Activated CD4-positive, alpha-beta T cell treated with anti-CD3 and anti-CD28 coated beads for 36 hours (primary cell): ENCODE measurements at regions of chr14 and their contacts with region 1.

Region 1: GRCh38 chr14:100213956-100214774 is 24.8 kb upstream of the YY1 start:
- DNase-seq: peak; percentile 97
- ATAC-seq: peak; percentile 96
- H3K4me3 Mint-ChIP-seq: peak overlapping the region; percentile 79
- H3K27ac Mint-ChIP-seq: peak overlapping the region; percentile 87
- H3K4me1 Mint-ChIP-seq: peaks cover 23% of the 10 kb centered on the region
- H3K27me3 Mint-ChIP-seq: no peaks in the 10 kb centered on the region

Region 2: DNA sequence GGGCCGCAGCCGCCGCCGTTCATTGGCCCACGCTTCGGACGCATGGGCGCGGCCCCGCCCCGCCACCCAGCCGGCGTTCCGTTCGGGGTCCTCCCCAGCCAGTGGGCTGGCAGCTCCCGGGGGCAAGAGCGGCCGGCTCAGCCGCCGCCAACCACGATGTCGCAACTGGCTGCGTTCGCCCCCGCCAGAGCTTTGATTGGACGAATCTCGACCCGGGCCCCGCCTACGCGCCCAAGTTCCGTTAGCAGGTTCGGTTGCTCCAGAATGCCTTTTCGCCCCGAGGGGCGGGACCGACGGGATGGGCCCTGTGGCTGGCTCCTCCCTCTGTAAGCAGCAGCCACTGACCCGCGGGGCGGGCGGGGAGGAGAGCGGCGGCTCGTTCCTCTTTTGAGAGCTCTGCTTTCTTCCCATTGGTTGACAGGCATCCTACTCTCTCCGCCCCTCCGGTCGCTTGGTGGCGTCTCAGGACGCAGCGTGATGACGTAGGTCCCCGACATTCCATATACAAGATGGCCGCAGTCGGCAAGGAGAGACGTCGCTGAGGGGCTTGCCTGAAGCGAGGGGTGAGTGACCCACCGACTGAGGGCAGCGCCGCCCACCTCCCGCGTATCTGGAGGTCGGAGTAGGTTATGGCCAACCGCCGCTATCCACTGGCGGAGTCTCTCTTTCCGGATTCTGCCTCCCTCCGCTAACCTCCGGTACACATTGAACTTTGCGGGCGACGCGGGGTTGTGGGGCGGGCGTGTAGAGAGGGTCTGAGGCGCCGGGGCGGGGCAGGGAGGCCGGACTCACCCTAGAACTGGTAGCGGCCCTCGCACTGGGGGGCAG is 733.0 kb before region 1 on chr14 and contains the start of gene CCNK:
- CTCF ChIA-PET with region 1: no interaction called
- POLR2A ChIA-PET with region 1: interaction called, 3 read pairs
- intact Hi-C with region 1: loop called in 1 of 2 experiments (anchors 1 kb)
- DNase-seq: peak; percentile 100
- ATAC-seq: peak; percentile 95
- H3K4me3 Mint-ChIP-seq: peak within 1 kb of the TSS; percentile 97
- H3K27ac Mint-ChIP-seq: peak within 1 kb of the TSS; percentile 96
- H3K4me1 Mint-ChIP-seq: peaks cover 58% of the 10 kb centered on the region
- H3K27me3 Mint-ChIP-seq: no peaks in the 10 kb centered on the region
- total RNA-seq, gene CCNK: 93.7 to 96.2 TPM

Region 3: GRCh38 chr14:99604283-99604765 is 609.8 kb before region 1 on chr14:
- CTCF ChIA-PET with region 1: no interaction called
- POLR2A ChIA-PET with region 1: no interaction called
- intact Hi-C with region 1: loop called in 1 of 2 experiments (anchors 2 kb)
- DNase-seq: peak; percentile 96
- ATAC-seq: peak; percentile 94
- H3K4me3 Mint-ChIP-seq: peak overlapping the region; percentile 72
- H3K27ac Mint-ChIP-seq: peak overlapping the region; percentile 72
- H3K4me1 Mint-ChIP-seq: peaks cover 28% of the 10 kb centered on the region
- H3K27me3 Mint-ChIP-seq: peaks cover 2% of the 10 kb centered on the region

Region 4: GRCh38 chr14:100155042-100155846 is 58.9 kb before region 1 on chr14:
- CTCF ChIA-PET with region 1: interaction called, 3 read pairs
- POLR2A ChIA-PET with region 1: no interaction called
- intact Hi-C with region 1: loop called in 1 of 2 experiments (anchors 2 kb)
- DNase-seq: peak; percentile 75
- ATAC-seq: no peak
- H3K4me3 Mint-ChIP-seq: no peak overlapping the region
- H3K27ac Mint-ChIP-seq: no peak overlapping the region
- H3K4me1 Mint-ChIP-seq: peaks cover 6% of the 10 kb centered on the region
- H3K27me3 Mint-ChIP-seq: peaks cover 15% of the 10 kb centered on the region

Region 5: DNA sequence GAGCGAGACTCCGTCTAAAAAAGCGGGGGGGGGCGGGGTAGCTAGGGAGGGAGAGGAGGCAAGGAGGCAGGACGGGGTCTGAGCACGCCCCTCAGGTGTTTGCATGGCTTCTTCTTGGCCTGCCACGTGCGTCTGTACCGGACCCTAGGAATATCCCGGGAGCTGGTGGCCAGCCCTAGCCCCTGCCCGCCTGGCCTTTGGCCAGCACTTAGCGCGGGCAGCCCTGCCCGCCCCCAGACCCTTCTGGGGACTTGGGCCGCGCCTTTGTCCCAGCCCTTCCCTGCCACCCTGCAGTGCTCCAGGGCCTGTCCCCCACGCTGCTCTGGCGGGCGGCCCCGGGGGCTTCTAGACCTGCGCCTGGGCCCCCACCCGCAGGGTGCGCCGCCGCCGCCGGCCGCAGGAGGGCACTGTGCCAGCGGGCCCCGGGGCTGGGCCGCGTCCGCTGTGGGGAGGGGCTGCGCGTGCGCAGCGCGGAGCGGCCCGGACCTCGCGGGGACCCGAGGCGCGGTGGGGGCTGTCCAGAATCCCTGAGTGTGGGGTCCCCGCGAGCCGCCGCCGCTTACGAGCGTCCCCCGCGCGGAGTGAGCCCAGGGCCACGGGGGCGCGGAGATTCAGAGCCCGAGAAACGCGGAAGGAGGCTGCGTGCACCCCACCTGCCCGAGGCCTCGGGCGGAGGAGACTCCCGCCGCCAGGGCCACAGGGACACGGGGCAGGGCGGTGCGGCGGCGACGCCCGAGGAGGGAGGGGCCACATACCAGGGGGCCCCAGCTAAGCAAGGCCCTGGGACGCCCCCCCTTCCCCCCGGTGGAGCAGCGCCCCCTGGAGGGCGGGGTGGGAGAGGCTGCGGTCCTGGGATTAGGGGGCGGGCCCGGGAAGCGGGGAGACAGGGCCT is 71.1 kb after region 1 on chr14:
- CTCF ChIA-PET with region 1: no interaction called
- POLR2A ChIA-PET with region 1: no interaction called
- intact Hi-C with region 1: loop called in 1 of 2 experiments (anchors 1 kb)
- DNase-seq: peak; percentile 88
- ATAC-seq: peak; percentile 89
- H3K4me3 Mint-ChIP-seq: peak overlapping the region; percentile 68
- H3K27ac Mint-ChIP-seq: no peak overlapping the region
- H3K4me1 Mint-ChIP-seq: peaks cover 7% of the 10 kb centered on the region
- H3K27me3 Mint-ChIP-seq: no peaks in the 10 kb centered on the region